Left cardiac atrium (tissue), 4 donors: ENCODE measurements at regions of chr11 and their contacts with region 1.

Region 1: GRCh38 chr11:65366340-65366773 is 11.8 kb downstream of the TIGD3 start:
- DNase-seq: no peak
- ATAC-seq: peak; percentile 73 to 81

Region 2: GRCh38 chr11:65506770-65507505 is 140.6 kb after region 1 on chr11:
- intact Hi-C with region 1: loop called (anchors 1 to 5 kb)
- DNase-seq: peak; percentile 39
- ATAC-seq: peak; percentile 19 to 42

Region 3: DNA sequence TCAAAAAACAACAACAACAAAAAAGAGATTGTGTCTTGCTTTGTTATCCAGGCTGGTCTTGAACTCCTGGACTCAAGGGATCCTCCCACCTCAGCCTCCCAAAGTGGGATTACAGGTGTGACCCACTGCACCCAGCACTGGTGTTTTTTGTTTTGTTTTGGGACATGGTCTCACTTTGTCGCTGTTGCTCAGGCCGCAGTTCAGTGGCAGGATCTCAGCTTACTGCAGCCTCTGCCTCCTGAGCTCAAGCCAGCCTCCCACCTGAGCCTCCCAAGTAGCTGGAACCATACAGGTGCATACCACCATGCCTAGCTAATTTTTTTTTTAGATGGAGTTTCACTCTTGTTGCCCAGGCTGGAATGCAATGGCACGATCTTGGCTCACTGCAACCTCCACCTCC is 145.9 kb after region 1 on chr11:
- intact Hi-C with region 1: loop called (anchors 1 to 5 kb)
- DNase-seq: no peak
- ATAC-seq: no peak